Activated B cell treated with CpG ODN at 0.5 μM for 24 hours (primary cell): ENCODE measurements at regions of chr4 and their contacts with region 1.

Region 1: DNA sequence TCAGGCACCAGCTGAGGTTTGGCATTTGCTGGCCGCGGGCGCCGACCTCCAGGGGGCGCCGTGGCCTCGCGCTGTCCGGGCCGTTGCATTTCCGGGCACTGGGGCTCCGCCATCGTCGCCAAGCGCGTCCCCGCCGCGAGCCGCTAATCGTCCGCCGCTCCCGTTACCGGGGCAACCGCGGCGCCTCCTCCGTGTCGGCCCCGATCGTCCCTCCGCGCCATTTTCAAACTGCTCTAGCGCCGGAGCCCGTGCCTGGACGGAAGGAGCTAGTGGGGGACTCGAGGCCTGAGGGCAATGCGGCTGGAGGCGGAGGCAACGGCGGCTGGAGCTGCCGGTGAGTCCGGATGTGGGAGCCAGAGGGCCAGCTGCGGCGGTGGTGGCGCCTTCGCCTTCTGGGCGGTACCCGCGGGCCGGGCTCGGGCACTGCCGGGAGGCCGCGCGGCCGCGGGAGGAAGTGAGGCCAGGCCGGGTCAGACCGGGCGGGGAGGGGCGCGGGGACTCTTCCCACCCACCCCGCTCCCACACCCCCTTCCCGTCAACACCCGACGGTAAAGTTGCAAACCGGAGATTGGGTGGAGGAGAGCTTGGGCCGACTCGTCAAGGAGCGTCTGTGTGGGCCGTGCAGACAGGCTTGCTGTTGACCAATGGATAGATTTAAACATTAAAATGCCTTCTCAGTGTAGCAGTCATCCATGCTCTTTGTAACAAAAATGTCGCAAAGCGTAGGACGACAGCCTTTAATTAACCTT is at the start of gene CEP135:
- DNase-seq: peak; percentile 94
- ATAC-seq: peak; percentile 79
- H3K4me3 Mint-ChIP-seq: peak within 1 kb of the TSS; percentile 94
- H3K27ac Mint-ChIP-seq: peak within 1 kb of the TSS; percentile 99
- H3K4me1 Mint-ChIP-seq: peaks cover 58% of the 10 kb centered on the region
- H3K27me3 Mint-ChIP-seq: no peaks in the 10 kb centered on the region
- CTCF ChIP-seq: peak; percentile 63
- total RNA-seq, gene CEP135: 24.7 and 30.2 TPM in 2 replicates

Region 2: DNA sequence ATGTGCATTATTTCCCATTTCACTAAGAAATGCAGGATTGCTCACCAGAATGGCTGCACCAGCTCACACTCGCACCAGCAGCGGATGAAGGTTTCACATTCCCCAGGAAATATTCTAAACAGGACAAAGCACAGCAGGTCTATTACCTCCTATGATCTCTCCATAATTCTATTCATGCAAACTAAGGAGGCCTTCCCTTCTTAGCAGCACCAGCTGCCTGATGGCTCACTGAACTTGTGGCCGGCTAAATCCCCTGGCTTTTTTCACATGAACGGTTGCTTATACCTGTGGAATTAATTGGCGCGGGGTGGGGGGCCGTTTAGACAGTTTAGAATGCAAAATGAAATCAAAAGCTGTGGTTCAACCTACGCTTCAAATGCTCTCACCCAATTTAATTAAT is 676.3 kb before region 1 on chr4:
- CTCF ChIA-PET with region 1: no interaction called
- POLR2A ChIA-PET with region 1: no interaction called
- intact Hi-C with region 1: no loop called
- DNase-seq: no peak
- ATAC-seq: no peak
- H3K4me3 Mint-ChIP-seq: no peak overlapping the region
- H3K27ac Mint-ChIP-seq: no peak overlapping the region
- H3K4me1 Mint-ChIP-seq: no peaks in the 10 kb centered on the region
- H3K27me3 Mint-ChIP-seq: peaks cover 3% of the 10 kb centered on the region
- CTCF ChIP-seq: no peak

Region 3: GRCh38 chr4:55395529-55396307 is 553.2 kb before region 1 on chr4 and contains the start of gene TMEM165:
- CTCF ChIA-PET with region 1: interaction called, 3 read pairs
- POLR2A ChIA-PET with region 1: interaction called, 6 read pairs
- intact Hi-C with region 1: loop called (anchors 1 kb)
- DNase-seq: peak; percentile 89
- ATAC-seq: peak; percentile 92
- H3K4me3 Mint-ChIP-seq: peak within 1 kb of the TSS; percentile 91
- H3K27ac Mint-ChIP-seq: peak within 1 kb of the TSS; percentile 95
- H3K4me1 Mint-ChIP-seq: peaks cover 42% of the 10 kb centered on the region
- H3K27me3 Mint-ChIP-seq: no peaks in the 10 kb centered on the region
- CTCF ChIP-seq: no peak
- total RNA-seq, gene TMEM165: 80.3 and 90.2 TPM in 2 replicates

Region 4: GRCh38 chr4:55866973-55867574 is 81.8 kb before region 1 on chr4:
- CTCF ChIA-PET with region 1: interaction called, 3 read pairs
- POLR2A ChIA-PET with region 1: interaction called, 7 read pairs
- intact Hi-C with region 1: loop called (anchors 5 kb)
- DNase-seq: no peak
- ATAC-seq: peak; percentile 84
- H3K4me3 Mint-ChIP-seq: no peak overlapping the region
- H3K27ac Mint-ChIP-seq: no peak overlapping the region
- H3K4me1 Mint-ChIP-seq: peaks cover 22% of the 10 kb centered on the region
- H3K27me3 Mint-ChIP-seq: no peaks in the 10 kb centered on the region
- CTCF ChIP-seq: no peak

Region 5: DNA sequence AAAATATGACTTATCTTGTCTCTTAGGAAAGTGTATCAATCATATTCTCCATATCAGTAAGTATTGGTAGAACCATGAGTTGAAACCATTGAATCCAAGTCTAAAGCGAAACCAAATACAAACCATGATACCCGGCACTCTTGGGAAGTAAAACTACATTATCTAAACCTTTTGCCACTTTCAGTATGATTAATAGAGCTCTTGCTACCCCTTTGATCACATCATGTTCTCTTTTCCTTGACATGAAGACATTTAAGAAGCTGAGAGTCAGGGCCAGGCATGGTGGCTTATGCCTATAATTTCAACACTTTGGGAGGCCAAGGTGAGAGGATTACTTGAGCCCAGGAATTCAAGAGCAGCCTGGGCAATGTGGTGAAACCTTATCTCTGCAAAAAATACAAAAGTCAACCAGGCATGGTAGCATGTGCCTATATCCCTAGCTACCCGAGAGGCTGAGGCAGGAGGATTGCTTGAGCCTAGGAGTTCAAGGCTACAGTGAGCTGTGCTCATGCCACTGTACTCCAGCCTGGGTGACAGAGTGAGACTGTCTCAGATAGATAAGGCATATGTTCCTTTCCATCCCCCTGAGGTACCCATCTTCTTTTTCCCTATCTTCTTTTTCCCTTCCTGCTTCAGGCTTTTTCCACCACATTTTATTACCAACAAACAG is 45.2 kb after region 1 on chr4:
- CTCF ChIA-PET with region 1: interaction called, 7 read pairs
- POLR2A ChIA-PET with region 1: interaction called, 9 read pairs
- intact Hi-C with region 1: loop called (anchors 2 kb)
- DNase-seq: no peak
- ATAC-seq: peak; percentile 69
- H3K4me3 Mint-ChIP-seq: peak overlapping the region; percentile 3
- H3K27ac Mint-ChIP-seq: peak overlapping the region; percentile 59
- H3K4me1 Mint-ChIP-seq: peaks cover 36% of the 10 kb centered on the region
- H3K27me3 Mint-ChIP-seq: no peaks in the 10 kb centered on the region
- CTCF ChIP-seq: no peak

Region 6: DNA sequence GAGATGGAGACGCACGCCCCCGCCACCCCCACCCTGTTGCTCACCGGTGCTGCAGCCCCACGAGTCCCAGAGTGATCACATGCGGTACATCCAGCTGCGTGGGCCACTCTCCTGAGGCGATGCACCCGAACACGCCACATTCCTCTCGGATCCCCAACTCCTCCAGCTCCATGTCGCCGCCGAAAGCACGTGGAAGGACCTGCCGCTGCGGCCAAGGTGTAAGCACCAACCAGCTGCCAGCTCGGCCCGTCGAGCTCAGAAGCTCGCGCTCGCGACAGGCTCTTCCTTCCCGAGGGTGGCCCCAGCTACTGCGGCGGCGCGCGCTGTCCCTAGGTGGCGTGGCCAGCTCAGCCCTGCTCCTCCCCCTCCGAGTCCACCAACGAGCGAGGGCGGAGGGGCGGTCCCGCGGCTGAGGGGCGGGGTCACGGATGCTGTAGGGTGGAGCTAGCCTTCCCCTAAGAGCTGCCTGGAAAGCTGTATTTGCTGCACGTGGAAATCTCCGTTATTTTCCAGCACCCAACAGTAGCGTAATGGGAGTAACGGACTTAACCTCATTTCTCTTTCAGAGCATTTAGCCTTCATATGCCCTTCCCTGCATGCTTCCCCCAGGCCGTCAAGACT is 486.5 kb after region 1 on chr4 and contains the start of gene PPAT:
- CTCF ChIA-PET with region 1: interaction called, 11 read pairs
- POLR2A ChIA-PET with region 1: interaction called, 31 read pairs
- intact Hi-C with region 1: loop called (anchors 1 kb)
- DNase-seq: peak; percentile 98
- ATAC-seq: peak; percentile 86
- H3K4me3 Mint-ChIP-seq: peak within 1 kb of the TSS; percentile 90
- H3K27ac Mint-ChIP-seq: peak within 1 kb of the TSS; percentile 97
- H3K4me1 Mint-ChIP-seq: peaks cover 37% of the 10 kb centered on the region
- H3K27me3 Mint-ChIP-seq: no peaks in the 10 kb centered on the region
- CTCF ChIP-seq: no peak
- total RNA-seq, gene PPAT: 11.7 and 12.9 TPM in 2 replicates

Region 7: GRCh38 chr4:56907489-56908205 is 958.7 kb after region 1 on chr4 and contains the start of gene REST:
- CTCF ChIA-PET with region 1: interaction called, 4 read pairs
- POLR2A ChIA-PET with region 1: no interaction called
- intact Hi-C with region 1: loop called (anchors 1 kb)
- DNase-seq: peak; percentile 90
- ATAC-seq: peak; percentile 59
- H3K4me3 Mint-ChIP-seq: peak within 1 kb of the TSS; percentile 91
- H3K27ac Mint-ChIP-seq: peak within 1 kb of the TSS; percentile 77
- H3K4me1 Mint-ChIP-seq: peaks cover 41% of the 10 kb centered on the region
- H3K27me3 Mint-ChIP-seq: no peaks in the 10 kb centered on the region
- CTCF ChIP-seq: no peak
- total RNA-seq, gene REST: 48.3 and 49.1 TPM in 2 replicates